B cell (primary cell): ENCODE measurements at regions of chr20 and their contacts with region 1.

Region 1: DNA sequence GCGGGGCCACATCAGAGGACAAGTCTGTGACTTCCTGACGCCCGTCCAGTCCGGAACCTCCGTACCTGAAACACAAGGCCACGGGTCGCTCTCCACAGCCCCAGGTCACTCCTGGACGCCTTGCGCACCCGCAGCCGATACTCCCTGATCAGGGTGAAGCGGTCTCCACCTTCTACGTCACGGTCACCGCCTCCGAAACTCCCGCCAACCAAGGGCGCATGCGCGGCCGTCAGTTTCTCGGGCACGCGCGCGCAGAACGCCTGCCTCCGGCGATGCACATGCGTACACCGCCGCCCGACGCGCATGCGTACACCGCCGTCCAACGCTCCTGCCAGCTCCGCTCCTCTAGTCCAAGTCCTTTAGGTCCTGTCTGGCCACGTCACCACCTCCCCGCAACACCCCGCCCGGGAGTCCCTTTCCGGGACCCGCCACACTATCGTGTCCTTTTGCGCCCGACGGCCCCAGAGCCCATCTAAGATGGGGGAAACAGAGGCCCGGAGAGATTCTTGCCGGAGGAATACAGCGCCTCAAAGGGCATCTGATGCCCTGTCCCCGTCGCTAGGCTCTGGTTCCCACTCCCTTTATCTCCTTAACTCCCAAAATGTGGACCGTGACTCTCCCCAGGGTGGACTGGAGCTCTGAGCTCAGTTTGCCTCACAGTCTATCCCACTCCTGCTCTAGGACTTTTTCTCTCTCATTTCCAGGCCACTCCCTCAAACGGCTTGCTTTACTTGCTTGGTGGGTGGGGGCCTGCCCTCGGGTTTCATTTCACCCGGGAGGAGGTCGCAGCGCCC is at the start of gene DSN1:
- DNase-seq: peak; percentile 98
- ATAC-seq: peak; percentile 86
- H3K4me3 ChIP-seq: peak within 1 kb of the TSS; percentile 84 to 96 (median 92)
- H3K4me3 Mint-ChIP-seq: peak within 1 kb of the TSS; percentile 89
- H3K27ac ChIP-seq: peak within 1 kb of the TSS; percentile 77 to 92
- H3K27ac Mint-ChIP-seq: peak within 1 kb of the TSS; percentile 99
- H3K4me1 ChIP-seq: peaks cover 8 to 16% of the 10 kb centered on the region in 2 donors
- H3K4me1 Mint-ChIP-seq: peaks cover 33% of the 10 kb centered on the region
- H3K27me3 ChIP-seq: no peaks in the 10 kb centered on the region
- H3K27me3 Mint-ChIP-seq: no peaks in the 10 kb centered on the region
- CTCF ChIP-seq: no peak
- total RNA-seq, gene DSN1: 17.1 and 18.4 TPM in 2 replicates

Region 2: GRCh38 chr20:36460648-36461599 is 312.9 kb before region 1 on chr20:
- CTCF ChIA-PET with region 1: no interaction called
- POLR2A ChIA-PET with region 1: no interaction called
- intact Hi-C with region 1: loop called (anchors 1 kb)
- DNase-seq: peak; percentile 97
- ATAC-seq: peak; percentile 80
- H3K4me3 ChIP-seq: peak overlapping the region; percentile 40 to 79 (median 47)
- H3K4me3 Mint-ChIP-seq: peak overlapping the region; percentile 81
- H3K27ac ChIP-seq: peak overlapping the region; percentile 96 to 98
- H3K27ac Mint-ChIP-seq: peak overlapping the region; percentile 91
- H3K4me1 ChIP-seq: peaks cover 42 to 49% of the 10 kb centered on the region in 2 donors
- H3K4me1 Mint-ChIP-seq: peaks cover 46% of the 10 kb centered on the region
- H3K27me3 ChIP-seq: no peaks in the 10 kb centered on the region
- H3K27me3 Mint-ChIP-seq: no peaks in the 10 kb centered on the region
- CTCF ChIP-seq: no peak

Region 3: GRCh38 chr20:36745927-36746659 is 27.7 kb before region 1 on chr20 and contains the start of gene NDRG3:
- CTCF ChIA-PET with region 1: interaction called, 11 read pairs
- POLR2A ChIA-PET with region 1: interaction called, 5 read pairs
- intact Hi-C with region 1: loop called (anchors 1 kb)
- DNase-seq: peak; percentile 96
- ATAC-seq: peak; percentile 97
- H3K4me3 ChIP-seq: peak within 1 kb of the TSS; percentile 55 to 87 (median 74)
- H3K4me3 Mint-ChIP-seq: peak within 1 kb of the TSS; percentile 91
- H3K27ac ChIP-seq: peak within 1 kb of the TSS; percentile 50 to 79
- H3K27ac Mint-ChIP-seq: peak within 1 kb of the TSS; percentile 93
- H3K4me1 ChIP-seq: peaks cover 12 to 13% of the 10 kb centered on the region in 2 donors
- H3K4me1 Mint-ChIP-seq: peaks cover 21% of the 10 kb centered on the region
- H3K27me3 ChIP-seq: no peaks in the 10 kb centered on the region
- H3K27me3 Mint-ChIP-seq: no peaks in the 10 kb centered on the region
- CTCF ChIP-seq: peak; percentile 26
- total RNA-seq, gene NDRG3: 26.1 and 27.5 TPM in 2 replicates

Region 4: GRCh38 chr20:36754656-36755222 is 19.1 kb before region 1 on chr20:
- CTCF ChIA-PET with region 1: interaction called, 13 read pairs
- POLR2A ChIA-PET with region 1: interaction called, 6 read pairs
- intact Hi-C with region 1: loop called (anchors 2 kb)
- DNase-seq: peak; percentile 66
- ATAC-seq: peak; percentile 65
- H3K4me3 ChIP-seq: no peak overlapping the region
- H3K4me3 Mint-ChIP-seq: no peak overlapping the region
- H3K27ac ChIP-seq: no peak overlapping the region
- H3K27ac Mint-ChIP-seq: peak overlapping the region; percentile 37
- H3K4me1 ChIP-seq: peaks cover 29 to 30% of the 10 kb centered on the region in 2 donors
- H3K4me1 Mint-ChIP-seq: peaks cover 32% of the 10 kb centered on the region
- H3K27me3 ChIP-seq: no peaks in the 10 kb centered on the region
- H3K27me3 Mint-ChIP-seq: no peaks in the 10 kb centered on the region
- CTCF ChIP-seq: peak; percentile 76

Region 5: GRCh38 chr20:36808317-36809257 is 34.8 kb after region 1 on chr20:
- CTCF ChIA-PET with region 1: interaction called, 10 read pairs
- POLR2A ChIA-PET with region 1: no interaction called
- intact Hi-C with region 1: no loop called
- DNase-seq: peak; percentile 78
- ATAC-seq: peak; percentile 71
- H3K4me3 ChIP-seq: no peak overlapping the region
- H3K4me3 Mint-ChIP-seq: no peak overlapping the region
- H3K27ac ChIP-seq: no peak overlapping the region
- H3K27ac Mint-ChIP-seq: peak overlapping the region; percentile 50
- H3K4me1 ChIP-seq: peaks cover 0 to 9% of the 10 kb centered on the region in 2 donors
- H3K4me1 Mint-ChIP-seq: peaks cover 3% of the 10 kb centered on the region
- H3K27me3 ChIP-seq: no peaks in the 10 kb centered on the region
- H3K27me3 Mint-ChIP-seq: no peaks in the 10 kb centered on the region
- CTCF ChIP-seq: peak; percentile 83

Region 6: GRCh38 chr20:36847009-36847709 is 73.4 kb after region 1 on chr20:
- CTCF ChIA-PET with region 1: interaction called, 4 read pairs
- POLR2A ChIA-PET with region 1: interaction called, 4 read pairs
- intact Hi-C with region 1: loop called (anchors 5 kb)
- DNase-seq: no peak
- ATAC-seq: no peak
- H3K4me3 ChIP-seq: no peak overlapping the region
- H3K4me3 Mint-ChIP-seq: peak overlapping the region; percentile 11
- H3K27ac ChIP-seq: peak overlapping the region; percentile 97 to 98
- H3K27ac Mint-ChIP-seq: peak overlapping the region; percentile 96
- H3K4me1 ChIP-seq: peaks cover 82 to 95% of the 10 kb centered on the region in 2 donors
- H3K4me1 Mint-ChIP-seq: peaks cover 80% of the 10 kb centered on the region
- H3K27me3 ChIP-seq: no peaks in the 10 kb centered on the region
- H3K27me3 Mint-ChIP-seq: no peaks in the 10 kb centered on the region
- CTCF ChIP-seq: no peak